ENCODE measurements at regions of chr16 and their contacts with region 1.

Region 1: GRCh38 chr16:26345966-26346365 is 654.2 kb downstream of the HS3ST4 start:
- DNase-seq: no peak

Region 2: DNA sequence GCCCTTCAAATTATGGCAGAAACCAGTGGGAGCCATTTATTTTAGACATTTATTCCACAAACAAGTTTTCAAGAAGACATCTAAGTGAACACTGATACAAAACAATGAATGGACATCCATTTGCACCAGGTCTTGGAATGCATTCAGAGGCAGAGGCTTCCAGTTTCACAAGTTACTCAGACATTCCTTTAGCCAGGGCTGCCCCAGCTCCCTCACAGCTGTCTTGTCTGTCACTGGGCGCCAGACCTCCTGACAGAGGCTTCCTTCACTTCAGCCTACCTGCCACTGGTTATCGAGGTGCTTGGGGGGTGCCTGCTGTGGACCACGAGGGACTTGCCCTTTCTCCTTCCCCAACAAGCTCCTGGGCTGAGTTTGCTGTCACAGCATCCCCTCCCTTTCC is 1110.0 kb before region 1 on chr16:
- intact Hi-C with region 1: loop called in 1 of 2 experiments (anchors 5 kb)
- DNase-seq: no peak

Region 3: DNA sequence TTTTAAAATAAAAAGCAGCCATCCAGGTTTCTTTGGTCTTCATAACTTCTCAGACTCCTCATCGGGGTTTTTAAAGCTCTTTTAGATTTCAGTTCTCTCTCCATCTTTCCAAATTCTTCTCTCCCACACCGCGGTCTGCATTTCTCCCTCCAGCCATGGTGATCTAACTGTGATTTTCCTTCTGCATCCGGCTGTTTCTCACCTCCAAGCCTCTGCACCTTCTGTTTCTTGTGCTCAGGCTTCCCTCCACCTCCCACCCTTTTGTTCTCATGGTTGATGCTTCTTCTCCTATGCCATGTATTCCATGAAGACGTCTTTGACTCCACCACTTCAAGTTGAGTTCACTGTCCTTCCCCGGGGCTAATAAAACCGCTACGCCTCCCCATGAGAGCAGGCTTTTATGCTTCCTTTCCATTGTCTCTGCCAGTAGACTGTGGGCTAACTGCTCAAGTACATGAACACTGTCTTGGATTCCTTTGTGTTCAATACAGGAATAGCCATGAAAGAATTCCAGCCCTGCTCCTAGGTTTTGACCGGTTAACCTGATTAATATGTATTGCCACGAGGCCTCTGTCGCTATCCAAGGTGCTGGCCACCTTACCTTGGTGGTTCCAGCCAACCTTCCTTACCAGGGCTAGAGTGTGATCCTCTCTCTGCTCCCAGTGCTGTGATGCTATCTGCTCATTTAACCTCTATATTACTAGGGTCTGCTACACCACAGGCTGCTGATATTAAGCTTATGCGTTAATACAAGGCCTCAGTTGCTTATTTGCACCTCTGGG is 29.1 kb before region 1 on chr16:
- intact Hi-C with region 1: loop called in 1 of 2 experiments (anchors 1 kb)
- DNase-seq: no peak

Region 4: GRCh38 chr16:26491101-26491670 is 145.2 kb after region 1 on chr16:
- intact Hi-C with region 1: no loop called
- DNase-seq: no peak